HCT116 (cell line): ENCODE measurements at regions of chr3 and their contacts with region 1.

Region 1: DNA sequence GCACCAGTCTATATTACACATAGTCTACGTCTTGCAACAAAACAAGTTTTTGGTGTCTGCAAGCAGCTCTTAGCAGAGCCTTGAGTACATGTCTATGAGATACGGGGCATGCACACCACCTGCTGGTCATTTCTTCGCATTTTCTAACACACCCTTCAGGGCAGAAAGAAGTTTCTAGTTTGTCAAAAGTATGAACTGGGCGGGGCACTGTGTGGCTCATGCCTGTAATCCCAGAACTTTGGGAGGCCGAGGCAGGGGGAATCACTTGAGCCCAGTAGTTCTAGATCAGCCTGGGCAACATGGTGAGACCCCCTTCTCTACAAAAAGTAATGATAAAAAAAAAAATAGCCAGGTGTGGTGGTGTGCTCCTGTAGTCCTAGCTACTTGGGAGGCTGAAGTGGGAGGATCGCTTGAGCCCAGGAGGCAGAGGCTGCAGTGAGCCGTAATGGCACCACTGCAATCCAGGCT is 64.2 kb upstream of the ARL8B start:
- DNase-seq: peak; percentile 85
- ATAC-seq: peak; percentile 95
- H3K4me3 ChIP-seq: no peak overlapping the region
- H3K27ac ChIP-seq: no peak overlapping the region
- H3K4me1 ChIP-seq: peaks cover 0 to 23% of the 10 kb centered on the region in 2 experiments; a peak in 2 of 4 replicates
- H3K27me3 ChIP-seq: no peaks in the 10 kb centered on the region
- CTCF ChIP-seq: peak; percentile 64 to 95 (median 76)
- POLR2A ChIP-seq: no peak
- RAD21 ChIP-seq: peak; percentile 97

Region 2: GRCh38 chr3:4350789-4351163 is 707.1 kb before region 1 on chr3:
- CTCF ChIA-PET with region 1: interaction called, 4 read pairs
- POLR2A ChIA-PET with region 1: no interaction called
- RAD21 ChIA-PET with region 1: no interaction called
- intact Hi-C with region 1: loop called (anchors 10 kb)
- DNase-seq: peak; percentile 37
- ATAC-seq: peak; percentile 69
- H3K4me3 ChIP-seq: no peak overlapping the region
- H3K27ac ChIP-seq: no peak overlapping the region
- H3K4me1 ChIP-seq: no peaks in the 10 kb centered on the region
- H3K27me3 ChIP-seq: no peaks in the 10 kb centered on the region
- CTCF ChIP-seq: peak; percentile 64 to 76 (median 70)
- POLR2A ChIP-seq: no peak
- RAD21 ChIP-seq: peak; percentile 80

Region 3: DNA sequence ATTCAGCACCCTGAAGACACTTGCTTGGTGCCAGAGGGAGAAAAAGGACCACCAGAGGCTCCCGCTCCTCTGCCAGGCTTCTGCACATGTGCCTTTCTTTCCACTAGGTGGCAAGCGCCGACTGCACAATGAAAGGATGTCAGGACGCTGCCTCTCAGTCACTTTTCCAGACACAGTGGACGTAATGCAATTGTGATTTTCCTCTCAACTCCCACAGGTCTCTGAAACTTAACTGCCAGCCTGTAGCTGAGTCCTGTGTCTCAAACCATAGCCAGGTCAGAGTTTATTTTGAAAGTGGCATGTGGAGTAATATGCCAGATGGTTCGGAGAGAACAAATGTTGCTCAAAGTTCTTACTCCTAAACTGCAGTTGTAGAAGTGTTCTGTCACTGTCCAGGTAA is 401.8 kb before region 1 on chr3:
- CTCF ChIA-PET with region 1: interaction called, 3 read pairs
- POLR2A ChIA-PET with region 1: no interaction called
- RAD21 ChIA-PET with region 1: no interaction called
- intact Hi-C with region 1: loop called (anchors 1 kb)
- DNase-seq: peak; percentile 56
- ATAC-seq: peak; percentile 99
- H3K4me3 ChIP-seq: no peak overlapping the region
- H3K27ac ChIP-seq: no peak overlapping the region
- H3K4me1 ChIP-seq: no peaks in the 10 kb centered on the region
- H3K27me3 ChIP-seq: no peaks in the 10 kb centered on the region
- CTCF ChIP-seq: peak; percentile 85 to 95 (median 91)
- POLR2A ChIP-seq: no peak
- RAD21 ChIP-seq: peak; percentile 95

Region 4: DNA sequence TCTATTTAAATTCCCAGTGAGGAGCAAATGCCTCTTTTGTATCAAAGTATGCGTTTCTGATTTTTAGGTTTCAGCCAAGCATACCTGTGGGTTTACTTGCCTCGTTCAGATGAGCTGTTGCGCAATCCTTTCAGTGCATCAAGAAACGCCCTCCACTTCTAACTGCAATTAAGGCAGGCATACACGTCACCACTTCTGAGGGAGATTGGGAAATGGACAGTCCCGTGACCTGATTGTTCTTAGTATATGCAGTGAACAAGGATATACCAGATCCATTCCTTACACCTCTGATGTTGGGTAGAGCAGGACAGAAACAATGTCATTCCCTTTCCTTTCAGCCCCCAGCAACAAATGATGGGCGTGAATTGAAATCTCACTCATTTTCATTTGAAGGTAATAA is 345.7 kb before region 1 on chr3:
- CTCF ChIA-PET with region 1: interaction called, 86 read pairs
- POLR2A ChIA-PET with region 1: interaction called, 3 read pairs
- RAD21 ChIA-PET with region 1: interaction called, 17 to 26 read pairs
- intact Hi-C with region 1: loop called (anchors 1 kb)
- DNase-seq: peak; percentile 21
- ATAC-seq: no peak
- H3K4me3 ChIP-seq: no peak overlapping the region
- H3K27ac ChIP-seq: no peak overlapping the region
- H3K4me1 ChIP-seq: peaks cover 8% of the 10 kb centered on the region in 2 experiments; a peak in 2 of 4 replicates
- H3K27me3 ChIP-seq: no peaks in the 10 kb centered on the region
- CTCF ChIP-seq: no peak
- POLR2A ChIP-seq: no peak
- RAD21 ChIP-seq: no peak

Region 5: DNA sequence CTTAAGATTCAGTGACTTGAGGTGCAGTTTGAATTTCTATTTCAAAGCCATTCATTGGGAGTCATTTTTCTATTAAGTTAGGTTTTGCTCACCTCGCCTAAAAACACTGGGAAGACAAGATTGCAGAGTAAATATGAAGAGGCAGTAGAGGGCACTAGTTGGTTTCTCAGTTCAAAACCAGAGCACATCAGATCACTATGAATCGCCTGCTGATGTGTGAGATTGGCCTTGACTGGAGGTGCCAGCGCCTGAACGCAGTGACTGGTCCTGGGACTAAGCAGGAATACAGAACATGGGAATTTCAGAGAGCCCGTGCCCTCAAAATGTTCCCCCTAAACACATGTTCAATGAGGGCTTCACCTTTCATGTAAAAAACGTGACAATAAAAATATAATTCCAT is 335.8 kb before region 1 on chr3:
- CTCF ChIA-PET with region 1: interaction called, 18 read pairs
- POLR2A ChIA-PET with region 1: no interaction called
- RAD21 ChIA-PET with region 1: no interaction called
- intact Hi-C with region 1: no loop called
- DNase-seq: peak; percentile 68
- ATAC-seq: peak; percentile 87
- H3K4me3 ChIP-seq: no peak overlapping the region
- H3K27ac ChIP-seq: no peak overlapping the region
- H3K4me1 ChIP-seq: peaks cover 16 to 30% of the 10 kb centered on the region in 2 experiments; a peak in 3 of 4 replicates
- H3K27me3 ChIP-seq: no peaks in the 10 kb centered on the region
- CTCF ChIP-seq: peak; percentile 47 to 91 (median 60)
- POLR2A ChIP-seq: no peak
- RAD21 ChIP-seq: peak; percentile 97

Region 6: GRCh38 chr3:5330152-5330810 is 272.4 kb after region 1 on chr3:
- CTCF ChIA-PET with region 1: no interaction called
- POLR2A ChIA-PET with region 1: no interaction called
- RAD21 ChIA-PET with region 1: no interaction called
- intact Hi-C with region 1: no loop called
- DNase-seq: peak; percentile 82
- ATAC-seq: peak; percentile 91
- H3K4me3 ChIP-seq: peak overlapping the region in 1 of 2 experiments; percentile 33; a peak in 1 of 4 replicates
- H3K27ac ChIP-seq: no peak overlapping the region; the same call in 1 of the 2 replicates
- H3K4me1 ChIP-seq: peaks cover 7 to 13% of the 10 kb centered on the region in 2 experiments
- H3K27me3 ChIP-seq: no peaks in the 10 kb centered on the region
- CTCF ChIP-seq: no peak
- POLR2A ChIP-seq: no peak
- RAD21 ChIP-seq: no peak